A673 (cell line): ENCODE measurements at regions of chr16 and their contacts with region 1.

Region 1: GRCh38 chr16:83826146-83826913 is 18.6 kb downstream of the HSBP1 start:
- DNase-seq: peak; percentile 82
- H3K4me3 ChIP-seq: no peak overlapping the region
- H3K27ac ChIP-seq: no peak overlapping the region
- H3K4me1 ChIP-seq: no peaks in the 10 kb centered on the region
- H3K27me3 ChIP-seq: peaks cover 5% of the 10 kb centered on the region
- CTCF ChIP-seq: peak; percentile 93

Region 2: GRCh38 chr16:83433201-83433600 is 393.1 kb before region 1 on chr16:
- CTCF ChIA-PET with region 1: no interaction called
- POLR2A ChIA-PET with region 1: no interaction called
- intact Hi-C with region 1: no loop called
- DNase-seq: no peak
- H3K4me3 ChIP-seq: no peak overlapping the region
- H3K27ac ChIP-seq: no peak overlapping the region
- H3K4me1 ChIP-seq: no peaks in the 10 kb centered on the region
- H3K27me3 ChIP-seq: peaks cover 2% of the 10 kb centered on the region
- CTCF ChIP-seq: no peak

Region 3: DNA sequence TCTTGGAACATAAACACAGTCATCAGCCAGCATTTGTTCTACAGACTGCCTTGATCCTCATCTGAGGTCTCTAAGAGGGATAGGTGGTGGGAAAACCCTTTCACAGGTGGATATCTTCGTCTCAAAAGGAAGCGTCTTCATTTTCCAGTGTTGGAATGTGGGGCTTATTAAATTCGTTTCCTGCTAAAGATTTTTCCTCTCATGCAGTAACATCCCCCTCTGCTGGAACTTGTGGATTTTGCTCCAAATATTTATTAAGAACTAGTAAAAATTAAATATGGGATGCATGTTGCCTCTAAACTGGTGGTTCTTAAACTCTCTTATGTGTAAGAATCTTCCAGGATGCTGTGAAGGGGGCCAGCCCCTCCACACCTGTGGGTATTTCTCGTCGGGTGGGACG is 52.5 kb after region 1 on chr16:
- CTCF ChIA-PET with region 1: no interaction called
- POLR2A ChIA-PET with region 1: no interaction called
- intact Hi-C with region 1: loop called (anchors 1 kb)
- DNase-seq: peak; percentile 71
- H3K4me3 ChIP-seq: no peak overlapping the region
- H3K27ac ChIP-seq: no peak overlapping the region
- H3K4me1 ChIP-seq: no peaks in the 10 kb centered on the region
- H3K27me3 ChIP-seq: peaks cover 35% of the 10 kb centered on the region
- CTCF ChIP-seq: peak; percentile 63